ENCODE measurements at regions of chr11 and their contacts with region 1.

Region 1: DNA sequence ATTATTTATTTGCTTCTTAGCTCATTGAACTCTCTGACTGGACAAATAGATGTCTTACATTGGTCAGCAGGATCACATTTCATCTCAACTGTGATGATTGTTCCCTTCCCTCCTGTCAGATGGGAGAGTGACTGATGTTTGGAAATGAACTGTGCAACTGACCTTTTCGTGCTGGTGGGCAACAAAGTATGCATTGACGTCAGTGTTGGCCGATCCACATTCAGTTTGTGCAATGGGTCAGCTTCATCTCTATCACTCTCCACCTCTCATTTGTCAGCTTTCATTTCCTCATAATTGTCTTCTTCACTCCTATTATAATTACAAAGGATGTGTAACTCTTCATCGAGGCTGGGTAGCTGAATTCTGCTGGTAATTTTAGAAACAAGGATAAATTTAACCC is 71.3 kb downstream of the PPP2R1B start:
- DNase-seq: no peak
- ATAC-seq: peak; percentile 72
- H3K4me3 ChIP-seq: no peak overlapping the region
- H3K27ac ChIP-seq: no peak overlapping the region
- H3K4me1 ChIP-seq: peaks cover 14% of the 10 kb centered on the region
- H3K27me3 ChIP-seq: no peaks in the 10 kb centered on the region
- CTCF ChIP-seq: no peak
- EP300 ChIP-seq: peak; percentile 51 to 71; a peak in 2 of 4 replicates
- POLR2A ChIP-seq: no peak
- RAD21 ChIP-seq: no peak

Region 2: DNA sequence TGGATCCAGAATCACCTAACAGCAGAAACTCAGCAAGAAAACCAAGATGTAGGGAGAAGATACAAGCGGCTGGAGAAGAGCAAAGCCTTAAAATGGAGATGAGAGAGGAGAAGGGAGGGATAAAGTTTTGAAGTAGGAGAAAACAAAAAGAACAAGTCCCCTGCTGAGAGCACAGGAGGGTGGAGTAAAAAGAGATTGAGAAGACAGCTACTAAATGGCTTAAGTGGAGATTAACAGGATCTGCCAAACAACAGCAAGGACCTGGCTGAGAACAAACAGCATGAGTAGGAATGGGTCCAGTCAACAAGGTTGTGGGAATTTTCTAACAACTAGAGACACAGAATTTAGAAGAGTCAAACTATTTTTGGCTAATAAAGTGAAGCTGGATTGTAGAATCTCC is 200.8 kb before region 1 on chr11:
- CTCF ChIA-PET with region 1: no interaction called
- POLR2A ChIA-PET with region 1: no interaction called
- RAD21 ChIA-PET with region 1: no interaction called
- SMC1A ChIA-PET with region 1: no interaction called
- in situ Hi-C with region 1: no loop called
- intact Hi-C with region 1: no loop called
- DNase-seq: no peak
- ATAC-seq: no peak
- H3K4me3 ChIP-seq: no peak overlapping the region
- H3K27ac ChIP-seq: no peak overlapping the region
- H3K4me1 ChIP-seq: no peaks in the 10 kb centered on the region
- H3K27me3 ChIP-seq: peaks cover 0 to 2% of the 10 kb centered on the region in 2 experiments; a peak in 3 of 4 replicates
- CTCF ChIP-seq: no peak
- EP300 ChIP-seq: no peak
- POLR2A ChIP-seq: no peak
- RAD21 ChIP-seq: no peak

Region 3: DNA sequence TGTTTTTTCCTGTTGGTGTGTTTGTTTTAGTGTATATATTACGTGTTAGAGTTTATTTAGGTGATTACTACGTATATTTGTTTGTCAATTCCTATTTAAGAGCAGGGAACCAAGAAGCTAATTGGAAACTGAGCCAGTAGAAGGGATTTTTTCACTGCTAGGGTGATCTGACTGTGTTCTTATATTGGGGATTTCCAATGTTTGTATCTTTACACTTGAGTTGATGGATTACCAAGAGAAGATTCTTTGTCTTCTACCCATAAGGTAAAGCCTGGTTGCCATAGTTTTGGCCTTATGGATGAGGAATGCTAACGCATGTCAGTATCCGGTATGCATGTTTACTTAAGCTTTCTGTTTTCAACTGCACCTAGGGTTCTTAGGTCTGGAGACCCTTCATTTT is 57.0 kb before region 1 on chr11:
- CTCF ChIA-PET with region 1: interaction called, 3 read pairs
- POLR2A ChIA-PET with region 1: interaction called, 3 read pairs
- RAD21 ChIA-PET with region 1: interaction called, 5 read pairs
- SMC1A ChIA-PET with region 1: interaction called, 10 read pairs
- in situ Hi-C with region 1: no loop called
- intact Hi-C with region 1: no loop called
- DNase-seq: peak; percentile 21
- ATAC-seq: peak; percentile 89
- H3K4me3 ChIP-seq: no peak overlapping the region; the same call in 1 of the 2 replicates
- H3K27ac ChIP-seq: peak overlapping the region; percentile 27; the same call in 1 of the 2 replicates
- H3K4me1 ChIP-seq: peaks cover 2% of the 10 kb centered on the region; the same call in 1 of the 2 replicates
- H3K27me3 ChIP-seq: no peaks in the 10 kb centered on the region
- CTCF ChIP-seq: no peak
- EP300 ChIP-seq: no peak; a peak in 1 of 4 replicates
- POLR2A ChIP-seq: no peak
- RAD21 ChIP-seq: no peak

Region 4: DNA sequence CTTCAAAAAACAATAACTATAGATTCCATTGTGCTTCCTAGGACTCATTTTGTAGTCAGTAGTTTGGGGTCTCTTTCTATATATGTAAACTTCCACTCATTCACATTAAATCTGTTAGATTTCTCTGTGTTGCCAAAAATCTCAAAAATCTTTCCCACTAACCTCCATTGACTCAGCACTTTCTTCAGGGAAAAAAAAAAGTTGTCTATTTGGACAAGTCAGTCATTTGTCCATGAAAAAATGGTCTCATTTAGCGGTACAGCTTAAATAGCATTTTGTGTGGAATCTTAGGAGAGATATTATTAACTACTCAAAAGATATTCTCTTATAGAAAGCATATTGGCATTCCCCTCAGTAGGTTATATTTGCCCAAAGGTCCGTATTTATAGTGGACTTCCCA is 10.6 kb before region 1 on chr11:
- CTCF ChIA-PET with region 1: interaction called, 5 read pairs
- POLR2A ChIA-PET with region 1: no interaction called
- RAD21 ChIA-PET with region 1: interaction called, 4 read pairs
- SMC1A ChIA-PET with region 1: interaction called, 19 read pairs
- in situ Hi-C with region 1: no loop called
- intact Hi-C with region 1: no loop called
- DNase-seq: no peak
- ATAC-seq: no peak
- H3K4me3 ChIP-seq: no peak overlapping the region
- H3K27ac ChIP-seq: no peak overlapping the region
- H3K4me1 ChIP-seq: no peaks in the 10 kb centered on the region
- H3K27me3 ChIP-seq: no peaks in the 10 kb centered on the region
- CTCF ChIP-seq: no peak
- EP300 ChIP-seq: no peak
- POLR2A ChIP-seq: no peak
- RAD21 ChIP-seq: no peak

Region 5: GRCh38 chr11:111718436-111718835 is 23.6 kb after region 1 on chr11:
- CTCF ChIA-PET with region 1: interaction called, 4 read pairs
- POLR2A ChIA-PET with region 1: interaction called, 4 read pairs
- RAD21 ChIA-PET with region 1: interaction called, 5 read pairs
- SMC1A ChIA-PET with region 1: interaction called, 15 read pairs
- in situ Hi-C with region 1: no loop called
- intact Hi-C with region 1: no loop called
- DNase-seq: no peak
- ATAC-seq: no peak
- H3K4me3 ChIP-seq: no peak overlapping the region
- H3K27ac ChIP-seq: no peak overlapping the region
- H3K4me1 ChIP-seq: peaks cover 11% of the 10 kb centered on the region
- H3K27me3 ChIP-seq: no peaks in the 10 kb centered on the region
- CTCF ChIP-seq: no peak
- EP300 ChIP-seq: no peak
- POLR2A ChIP-seq: no peak
- RAD21 ChIP-seq: no peak

Region 6: DNA sequence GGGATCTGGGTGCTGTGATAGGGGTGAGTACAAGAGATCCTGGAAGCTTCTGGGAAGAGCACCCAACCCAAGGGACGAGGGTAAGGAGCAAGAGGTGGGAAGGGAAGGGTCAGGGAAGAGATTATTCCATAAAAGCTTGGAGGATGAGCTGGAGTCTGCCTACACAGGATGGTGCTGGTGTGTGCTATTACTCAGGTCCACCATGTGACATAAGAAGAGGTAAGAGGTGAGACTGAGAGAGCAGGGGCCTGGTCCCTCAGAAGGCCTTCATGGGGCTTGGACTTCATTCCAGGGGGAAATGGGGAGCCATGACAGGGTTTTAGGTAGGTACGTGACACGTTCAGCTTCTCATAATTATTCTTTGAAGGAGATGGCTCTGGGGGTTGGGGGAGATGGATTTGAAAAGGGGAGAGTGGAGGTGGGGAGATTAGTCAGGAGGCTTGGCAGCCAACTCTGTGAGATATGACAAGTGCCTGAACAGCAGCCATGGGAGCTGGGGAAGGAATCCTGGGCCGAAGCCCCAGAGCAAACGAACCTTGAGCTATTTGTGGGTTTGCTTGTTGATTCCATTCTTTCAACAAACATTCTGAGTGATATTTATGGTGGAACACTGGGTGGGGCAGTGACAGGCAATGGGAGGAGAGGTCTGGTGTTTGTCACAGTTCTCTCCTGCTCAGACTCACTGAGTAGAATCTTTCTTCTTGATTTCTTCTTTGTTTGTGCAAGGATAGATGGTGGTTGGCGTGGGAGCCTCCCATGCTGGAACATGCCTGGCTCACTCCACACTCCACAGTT is 1255.1 kb after region 1 on chr11:
- CTCF ChIA-PET with region 1: no interaction called
- POLR2A ChIA-PET with region 1: no interaction called
- RAD21 ChIA-PET with region 1: no interaction called
- SMC1A ChIA-PET with region 1: no interaction called
- in situ Hi-C with region 1: no loop called
- intact Hi-C with region 1: no loop called
- DNase-seq: no peak
- ATAC-seq: no peak
- H3K4me3 ChIP-seq: no peak overlapping the region
- H3K27ac ChIP-seq: no peak overlapping the region
- H3K4me1 ChIP-seq: no peaks in the 10 kb centered on the region
- H3K27me3 ChIP-seq: no peaks in the 10 kb centered on the region
- CTCF ChIP-seq: no peak
- EP300 ChIP-seq: no peak
- POLR2A ChIP-seq: no peak
- RAD21 ChIP-seq: no peak

Measured in GM12878 (cell line).